ENCODE measurements at regions of chr18 and their contacts with region 1.

Region 1: DNA sequence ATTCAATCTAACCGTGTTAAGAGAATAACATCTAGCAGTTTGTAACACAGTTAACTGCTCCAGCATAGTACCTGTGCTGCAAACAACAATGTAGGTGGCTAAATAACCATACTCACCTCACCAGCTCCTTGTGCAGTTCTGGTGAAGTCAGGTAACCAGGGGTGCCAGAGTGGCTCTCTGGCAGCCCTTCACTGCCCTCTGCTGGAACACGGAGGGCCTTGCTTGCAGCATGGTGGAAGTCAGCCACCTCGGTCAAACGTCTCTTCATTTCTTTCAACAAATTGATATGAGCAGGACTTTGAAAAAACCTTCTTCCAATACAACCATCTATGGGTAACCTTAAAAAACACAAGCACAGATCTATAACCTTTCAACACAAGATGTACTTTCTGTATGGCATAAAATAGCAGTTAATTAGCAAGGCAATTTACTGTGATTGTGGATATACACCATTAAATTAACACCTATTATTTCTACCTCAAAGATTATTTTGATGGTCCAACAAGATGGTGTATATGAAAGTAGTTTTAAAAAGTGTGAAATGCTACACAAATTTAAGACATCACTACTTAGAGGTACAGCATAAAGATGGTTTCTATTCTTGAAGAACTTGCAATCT is 56.6 kb downstream of the EPG5 start:
- DNase-seq: peak; percentile 49
- ATAC-seq: peak; percentile 77; the same call in 1 of the 2 replicates
- H3K4me3 ChIP-seq: no peak overlapping the region
- H3K27ac ChIP-seq: no peak overlapping the region
- H3K4me1 ChIP-seq: no peaks in the 10 kb centered on the region
- H3K27me3 ChIP-seq: no peaks in the 10 kb centered on the region
- CTCF ChIP-seq: peak; percentile 63
- POLR2A ChIP-seq: no peak
- RAD21 ChIP-seq: peak; percentile 66

Region 2: DNA sequence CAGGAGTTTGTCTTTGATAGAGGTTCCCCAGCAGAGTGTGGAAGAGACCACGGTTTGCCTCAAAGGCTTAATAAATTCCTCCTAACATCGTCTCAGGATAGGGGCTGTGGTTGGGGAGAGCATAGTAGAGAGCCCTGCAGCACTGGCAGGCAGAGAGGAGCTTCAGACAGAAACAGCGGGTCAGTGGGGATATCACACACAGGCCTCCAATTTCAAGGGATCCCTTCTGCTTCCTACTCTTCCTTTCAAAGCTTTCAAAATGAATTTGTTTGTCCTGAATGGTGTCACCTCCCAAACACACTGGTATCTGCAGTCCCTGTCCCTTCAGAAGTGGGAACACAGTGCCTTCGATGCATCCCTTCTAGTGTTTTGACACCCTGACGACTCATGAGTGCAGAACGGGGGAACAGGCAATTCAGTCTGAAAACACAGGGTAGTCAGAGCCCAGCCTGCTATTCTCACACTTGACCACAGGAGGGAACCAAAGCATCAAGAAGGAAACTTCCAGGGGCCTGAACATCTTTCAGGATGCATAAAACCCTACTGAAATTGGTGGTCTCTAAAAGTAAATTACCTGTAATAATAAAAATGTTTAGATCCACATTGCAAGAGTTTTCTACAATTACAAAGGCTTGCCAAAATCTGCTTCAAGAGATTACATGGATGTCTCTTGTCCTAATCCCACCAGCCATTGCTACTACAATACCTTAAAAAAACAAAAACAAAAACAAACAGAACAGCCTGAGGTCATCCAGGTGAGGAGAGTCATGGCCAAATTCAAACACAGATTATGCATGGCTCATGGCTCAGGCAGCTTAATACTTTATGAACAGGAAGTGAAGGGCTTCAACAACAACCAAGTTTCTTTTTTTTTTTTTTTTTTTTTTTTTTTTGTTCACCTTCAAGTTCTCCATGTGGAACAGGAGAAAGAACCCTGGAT is 245.4 kb before region 1 on chr18:
- CTCF ChIA-PET with region 1: no interaction called
- POLR2A ChIA-PET with region 1: interaction called, 10 read pairs
- dilution Hi-C with region 1: no loop called
- in situ Hi-C with region 1: no loop called
- intact Hi-C with region 1: loop called (anchors 1 kb)
- DNase-seq: peak; percentile 68
- ATAC-seq: peak; percentile 81
- H3K4me3 ChIP-seq: no peak overlapping the region
- H3K27ac ChIP-seq: no peak overlapping the region
- H3K4me1 ChIP-seq: peaks cover 8% of the 10 kb centered on the region
- H3K27me3 ChIP-seq: no peaks in the 10 kb centered on the region
- CTCF ChIP-seq: peak; percentile 94
- POLR2A ChIP-seq: peak; percentile 39; the same call in 1 of the 2 replicates
- RAD21 ChIP-seq: peak; percentile 96

Region 3: DNA sequence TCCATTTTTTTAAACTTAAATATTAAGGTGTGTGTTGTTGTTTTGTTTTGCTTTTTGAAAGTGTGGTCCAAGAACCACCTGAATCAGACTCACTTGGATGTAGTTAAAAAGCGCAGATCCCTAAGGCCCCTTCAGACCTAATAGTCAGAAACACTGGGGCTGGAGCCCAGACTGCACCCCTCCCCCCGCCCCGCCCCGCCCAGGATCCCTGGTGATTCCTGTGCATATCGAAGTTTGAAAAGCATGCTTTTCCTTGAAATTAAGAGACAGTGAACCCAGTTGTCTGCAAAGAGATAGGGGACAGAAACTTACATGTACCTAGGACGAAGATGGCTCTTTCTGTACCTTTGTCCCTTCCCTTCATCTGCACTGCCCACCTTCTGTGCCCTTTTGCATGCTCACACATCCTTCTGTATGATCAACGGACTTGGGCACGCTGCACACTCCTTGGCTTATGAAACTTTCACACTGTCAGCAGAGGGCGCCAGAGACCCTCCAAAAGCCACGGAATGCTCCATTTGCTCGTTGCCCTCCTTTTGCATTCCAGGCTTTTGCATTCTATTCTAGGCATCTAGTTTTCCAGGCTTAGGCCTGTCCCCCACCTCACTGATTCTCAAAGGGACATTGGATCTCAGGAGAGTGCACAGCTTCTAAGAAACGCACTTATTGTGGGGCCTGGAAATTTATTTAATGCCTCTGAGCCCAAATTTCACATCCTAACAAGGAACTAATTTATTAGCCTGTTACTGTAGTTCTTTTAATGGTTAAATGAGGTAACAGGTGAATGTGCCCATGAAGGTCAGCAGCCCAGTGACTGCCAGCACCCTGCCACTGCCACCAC is 219.3 kb before region 1 on chr18:
- CTCF ChIA-PET with region 1: interaction called, 3 read pairs
- POLR2A ChIA-PET with region 1: no interaction called
- dilution Hi-C with region 1: no loop called
- in situ Hi-C with region 1: no loop called
- intact Hi-C with region 1: loop called (anchors 1 kb)
- DNase-seq: peak; percentile 76
- ATAC-seq: peak; percentile 86
- H3K4me3 ChIP-seq: no peak overlapping the region
- H3K27ac ChIP-seq: no peak overlapping the region
- H3K4me1 ChIP-seq: peaks cover 16% of the 10 kb centered on the region
- H3K27me3 ChIP-seq: no peaks in the 10 kb centered on the region
- CTCF ChIP-seq: peak; percentile 93
- POLR2A ChIP-seq: peak; percentile 67
- RAD21 ChIP-seq: peak; percentile 99

Region 4: GRCh38 chr18:45859334-45859733 is 51.2 kb before region 1 on chr18:
- CTCF ChIA-PET with region 1: no interaction called
- POLR2A ChIA-PET with region 1: no interaction called
- dilution Hi-C with region 1: no loop called
- in situ Hi-C with region 1: no loop called
- intact Hi-C with region 1: loop called (anchors 2 kb)
- DNase-seq: no peak
- ATAC-seq: no peak
- H3K4me3 ChIP-seq: no peak overlapping the region
- H3K27ac ChIP-seq: no peak overlapping the region
- H3K4me1 ChIP-seq: peaks cover 2% of the 10 kb centered on the region; the same call in 1 of the 2 replicates
- H3K27me3 ChIP-seq: no peaks in the 10 kb centered on the region
- CTCF ChIP-seq: no peak
- POLR2A ChIP-seq: no peak
- RAD21 ChIP-seq: no peak

Region 5: GRCh38 chr18:46080156-46080555 is 169.6 kb after region 1 on chr18:
- CTCF ChIA-PET with region 1: no interaction called
- POLR2A ChIA-PET with region 1: no interaction called
- dilution Hi-C with region 1: no loop called
- in situ Hi-C with region 1: loop called (anchors 10 kb)
- intact Hi-C with region 1: no loop called
- DNase-seq: no peak
- ATAC-seq: no peak
- H3K4me3 ChIP-seq: no peak overlapping the region
- H3K27ac ChIP-seq: no peak overlapping the region
- H3K4me1 ChIP-seq: peaks cover 2% of the 10 kb centered on the region; the same call in 1 of the 2 replicates
- H3K27me3 ChIP-seq: no peaks in the 10 kb centered on the region
- CTCF ChIP-seq: no peak
- POLR2A ChIP-seq: no peak
- RAD21 ChIP-seq: no peak

Measured in IMR-90 (cell line).